Activated B cell treated with CpG ODN at 0.5 μM for 24 hours (primary cell): ENCODE measurements at regions of chr15 and their contacts with region 1.

Region 1: GRCh38 chr15:45166834-45167630 is 20.7 kb downstream of the SHF start:
- DNase-seq: peak; percentile 75
- ATAC-seq: peak; percentile 95
- H3K4me3 Mint-ChIP-seq: peak overlapping the region; percentile 81
- H3K27ac Mint-ChIP-seq: peak overlapping the region; percentile 80
- H3K4me1 Mint-ChIP-seq: peaks cover 32% of the 10 kb centered on the region
- H3K27me3 Mint-ChIP-seq: no peaks in the 10 kb centered on the region
- CTCF ChIP-seq: no peak

Region 2: DNA sequence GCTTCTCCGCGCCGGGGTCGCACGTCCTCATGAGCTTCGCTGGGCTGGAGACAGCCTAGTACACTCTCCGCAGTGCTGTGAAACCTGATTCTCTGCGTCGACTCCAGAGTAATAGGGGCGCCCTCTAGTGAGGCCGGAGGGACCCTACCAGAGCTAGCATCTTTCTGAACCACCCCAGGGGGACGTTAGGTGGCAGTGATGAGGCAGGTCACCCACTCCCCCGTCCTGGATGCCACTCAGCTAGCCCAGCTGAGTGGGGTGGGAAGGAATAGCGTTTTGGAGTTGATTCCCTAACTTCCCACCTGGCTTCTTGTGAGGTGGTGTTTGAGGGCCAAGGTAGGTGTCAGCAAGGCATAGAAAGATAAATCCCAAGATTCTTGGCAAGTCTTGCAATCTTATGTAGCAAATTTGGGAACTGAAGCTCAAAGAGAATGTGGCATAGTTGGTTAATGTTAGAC is 48.9 kb before region 1 on chr15:
- CTCF ChIA-PET with region 1: interaction called, 9 read pairs
- POLR2A ChIA-PET with region 1: no interaction called
- intact Hi-C with region 1: loop called (anchors 1 kb)
- DNase-seq: peak; percentile 71
- ATAC-seq: peak; percentile 99
- H3K4me3 Mint-ChIP-seq: peak overlapping the region; percentile 81
- H3K27ac Mint-ChIP-seq: no peak overlapping the region
- H3K4me1 Mint-ChIP-seq: peaks cover 42% of the 10 kb centered on the region
- H3K27me3 Mint-ChIP-seq: peaks cover 76% of the 10 kb centered on the region
- CTCF ChIP-seq: peak; percentile 96

Region 3: GRCh38 chr15:45179221-45179985 is 12.4 kb after region 1 on chr15:
- CTCF ChIA-PET with region 1: interaction called, 16 read pairs
- POLR2A ChIA-PET with region 1: interaction called, 4 read pairs
- intact Hi-C with region 1: no loop called
- DNase-seq: no peak
- ATAC-seq: peak; percentile 45
- H3K4me3 Mint-ChIP-seq: no peak overlapping the region
- H3K27ac Mint-ChIP-seq: no peak overlapping the region
- H3K4me1 Mint-ChIP-seq: peaks cover 3% of the 10 kb centered on the region
- H3K27me3 Mint-ChIP-seq: no peaks in the 10 kb centered on the region
- CTCF ChIP-seq: no peak

Region 4: GRCh38 chr15:45268135-45268534 is 101.1 kb after region 1 on chr15:
- CTCF ChIA-PET with region 1: interaction called, 5 read pairs
- POLR2A ChIA-PET with region 1: no interaction called
- intact Hi-C with region 1: loop called (anchors 1 kb)
- DNase-seq: no peak
- ATAC-seq: no peak
- H3K4me3 Mint-ChIP-seq: no peak overlapping the region
- H3K27ac Mint-ChIP-seq: no peak overlapping the region
- H3K4me1 Mint-ChIP-seq: no peaks in the 10 kb centered on the region
- H3K27me3 Mint-ChIP-seq: peaks cover 8% of the 10 kb centered on the region
- CTCF ChIP-seq: no peak

Region 5: DNA sequence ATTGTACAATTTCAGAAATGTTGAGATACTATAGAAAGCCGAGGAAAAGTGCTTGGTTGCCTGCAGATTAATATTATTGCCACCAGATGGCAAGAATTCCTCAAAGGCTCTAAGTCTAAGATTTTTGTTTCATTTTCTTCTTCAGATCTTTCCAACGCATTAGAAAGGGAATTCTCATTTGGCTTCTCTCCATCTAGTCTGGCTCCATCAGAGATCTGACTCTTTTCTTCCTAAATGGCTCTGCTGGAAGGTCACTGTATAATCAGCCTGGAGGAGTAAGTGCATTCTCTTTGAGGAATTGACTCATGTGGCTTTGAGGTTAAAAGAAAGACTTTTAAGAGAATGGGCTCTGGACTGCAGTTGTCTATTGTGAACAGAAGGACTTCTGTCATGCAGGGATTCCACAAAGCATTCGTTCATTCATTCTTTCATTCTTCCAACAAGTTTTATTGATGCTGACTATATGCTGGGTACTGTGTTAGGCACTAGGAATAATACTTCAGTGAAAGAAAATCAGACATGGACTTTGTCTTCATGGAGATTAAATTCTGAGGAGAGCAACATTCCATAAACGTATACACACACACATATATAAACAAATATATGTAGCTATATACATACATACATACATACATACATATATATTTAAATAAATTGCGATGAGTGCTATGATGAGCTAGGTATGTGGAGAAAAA is 140.3 kb after region 1 on chr15:
- CTCF ChIA-PET with region 1: interaction called, 3 read pairs
- POLR2A ChIA-PET with region 1: no interaction called
- intact Hi-C with region 1: loop called (anchors 1 kb)
- DNase-seq: no peak
- ATAC-seq: no peak
- H3K4me3 Mint-ChIP-seq: peak overlapping the region; percentile 79
- H3K27ac Mint-ChIP-seq: peak overlapping the region; percentile 50
- H3K4me1 Mint-ChIP-seq: peaks cover 4% of the 10 kb centered on the region
- H3K27me3 Mint-ChIP-seq: peaks cover 34% of the 10 kb centered on the region
- CTCF ChIP-seq: no peak

Region 6: GRCh38 chr15:45611305-45611704 is 444.3 kb after region 1 on chr15:
- CTCF ChIA-PET with region 1: interaction called, 7 read pairs
- POLR2A ChIA-PET with region 1: no interaction called
- intact Hi-C with region 1: loop called (anchors 1 kb)
- DNase-seq: no peak
- ATAC-seq: no peak
- H3K4me3 Mint-ChIP-seq: no peak overlapping the region
- H3K27ac Mint-ChIP-seq: no peak overlapping the region
- H3K4me1 Mint-ChIP-seq: peaks cover 12% of the 10 kb centered on the region
- H3K27me3 Mint-ChIP-seq: no peaks in the 10 kb centered on the region
- CTCF ChIP-seq: no peak

Region 7: GRCh38 chr15:47135267-47135666 is 1968.2 kb after region 1 on chr15:
- CTCF ChIA-PET with region 1: no interaction called
- POLR2A ChIA-PET with region 1: no interaction called
- intact Hi-C with region 1: no loop called
- DNase-seq: no peak
- ATAC-seq: no peak
- H3K4me3 Mint-ChIP-seq: no peak overlapping the region
- H3K27ac Mint-ChIP-seq: no peak overlapping the region
- H3K4me1 Mint-ChIP-seq: no peaks in the 10 kb centered on the region
- H3K27me3 Mint-ChIP-seq: no peaks in the 10 kb centered on the region
- CTCF ChIP-seq: no peak